Ovary (tissue), 10 donors: ENCODE measurements at regions of chr1 and their contacts with region 1.

Region 1: DNA sequence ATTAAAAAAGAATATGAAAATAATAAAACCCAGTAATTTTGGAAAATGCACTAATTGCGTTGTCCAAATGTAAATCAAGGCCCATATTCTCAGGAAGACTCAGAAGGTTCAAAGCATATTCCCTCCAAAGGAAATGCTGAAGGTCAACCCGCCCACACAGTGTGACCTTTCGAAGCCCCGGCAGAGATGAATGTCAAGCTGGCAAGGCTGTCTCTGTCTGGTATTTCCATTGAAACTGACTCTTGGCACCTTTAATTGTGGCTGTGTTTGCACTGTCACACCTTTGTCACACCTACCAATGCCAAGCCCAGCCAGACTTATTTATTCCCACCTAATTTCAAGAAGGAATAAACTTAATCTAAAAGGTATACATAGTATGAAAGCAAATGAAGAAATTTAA is 82.5 kb downstream of the NTPCR start:
- DNase-seq: no peak
- H3K4me3 ChIP-seq: no peak overlapping the region
- H3K27ac ChIP-seq: no peak overlapping the region
- H3K4me1 ChIP-seq: peaks cover 1% of the 10 kb centered on the region
- H3K27me3 ChIP-seq: no peaks in the 10 kb centered on the region
- CTCF ChIP-seq: no peak
- EP300 ChIP-seq: no peak
- POLR2A ChIP-seq: no peak

Region 2: GRCh38 chr1:232667778-232668165 is 365.1 kb before region 1 on chr1:
- intact Hi-C with region 1: no loop called
- DNase-seq: no peak
- H3K4me3 ChIP-seq: no peak overlapping the region
- H3K27ac ChIP-seq: no peak overlapping the region
- H3K4me1 ChIP-seq: no peaks in the 10 kb centered on the region
- H3K27me3 ChIP-seq: no peaks in the 10 kb centered on the region
- CTCF ChIP-seq: no peak
- EP300 ChIP-seq: no peak
- POLR2A ChIP-seq: no peak

Region 3: GRCh38 chr1:232813760-232814159 is 219.2 kb before region 1 on chr1:
- intact Hi-C with region 1: no loop called
- DNase-seq: no peak
- H3K4me3 ChIP-seq: no peak overlapping the region
- H3K27ac ChIP-seq: no peak overlapping the region
- H3K4me1 ChIP-seq: no peaks in the 10 kb centered on the region
- H3K27me3 ChIP-seq: no peaks in the 10 kb centered on the region
- CTCF ChIP-seq: no peak
- EP300 ChIP-seq: no peak
- POLR2A ChIP-seq: no peak

Region 4: DNA sequence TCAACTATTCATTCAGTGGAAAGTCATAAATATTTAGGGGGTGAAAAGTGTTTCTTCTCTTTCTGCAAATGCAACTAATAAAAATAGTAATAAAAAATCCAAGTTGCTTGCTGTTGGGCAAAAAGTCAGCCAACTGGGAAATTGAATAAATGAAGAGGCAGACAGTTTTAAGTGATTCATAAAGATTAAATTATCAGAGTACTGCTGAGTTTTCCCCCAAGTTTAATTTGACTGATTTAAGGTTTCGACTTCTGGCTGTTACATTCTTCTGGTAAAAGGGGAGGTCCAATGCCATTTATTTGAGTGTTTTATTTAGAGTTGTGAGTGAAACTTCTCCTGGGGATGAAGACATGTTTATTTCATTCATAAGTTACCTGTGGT is 43.0 kb after region 1 on chr1:
- intact Hi-C with region 1: loop called in 1 of 4 experiments (anchors 1 kb)
- DNase-seq: no peak
- H3K4me3 ChIP-seq: no peak overlapping the region
- H3K27ac ChIP-seq: no peak overlapping the region
- H3K4me1 ChIP-seq: peaks cover 2% of the 10 kb centered on the region
- H3K27me3 ChIP-seq: no peaks in the 10 kb centered on the region
- CTCF ChIP-seq: no peak
- EP300 ChIP-seq: no peak
- POLR2A ChIP-seq: no peak